Activated naive CD4-positive, alpha-beta T cell treated with anti-CD3 and anti-CD28 coated beads for 36 hours (primary cell): ENCODE measurements at regions of chr4 and their contacts with region 1.

Region 1: GRCh38 chr4:122689972-122690371 is 42.5 kb upstream of the BBS12 start:
- DNase-seq: no peak
- H3K4me3 Mint-ChIP-seq: no peak overlapping the region
- H3K27ac Mint-ChIP-seq: no peak overlapping the region
- H3K4me1 Mint-ChIP-seq: peaks cover 53% of the 10 kb centered on the region
- H3K27me3 Mint-ChIP-seq: peaks cover 2% of the 10 kb centered on the region

Region 2: DNA sequence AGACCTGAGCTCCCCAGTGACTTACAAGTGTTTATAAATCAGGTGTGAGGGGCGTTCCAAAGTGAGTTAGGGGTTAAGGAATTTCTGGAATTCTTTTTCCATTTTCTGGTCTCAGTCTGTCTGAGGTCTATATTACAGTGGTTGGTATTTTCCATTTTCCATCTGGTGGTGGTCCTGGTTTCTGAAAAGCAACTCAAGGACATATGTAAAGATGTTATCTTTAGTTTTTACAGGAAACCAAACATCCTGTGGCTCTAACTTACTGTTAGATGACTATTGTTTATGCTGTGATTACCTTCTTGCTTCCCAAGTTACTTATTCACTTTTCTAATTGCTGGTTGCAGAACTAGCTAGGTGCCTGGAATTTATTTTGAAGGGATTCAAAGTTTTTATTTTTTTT is 15.6 kb before region 1 on chr4:
- CTCF ChIA-PET with region 1: interaction called, 4 read pairs
- intact Hi-C with region 1: loop called (anchors 1 kb)
- DNase-seq: no peak
- H3K4me3 Mint-ChIP-seq: no peak overlapping the region
- H3K27ac Mint-ChIP-seq: no peak overlapping the region
- H3K4me1 Mint-ChIP-seq: peaks cover 38% of the 10 kb centered on the region
- H3K27me3 Mint-ChIP-seq: peaks cover 18% of the 10 kb centered on the region

Region 3: DNA sequence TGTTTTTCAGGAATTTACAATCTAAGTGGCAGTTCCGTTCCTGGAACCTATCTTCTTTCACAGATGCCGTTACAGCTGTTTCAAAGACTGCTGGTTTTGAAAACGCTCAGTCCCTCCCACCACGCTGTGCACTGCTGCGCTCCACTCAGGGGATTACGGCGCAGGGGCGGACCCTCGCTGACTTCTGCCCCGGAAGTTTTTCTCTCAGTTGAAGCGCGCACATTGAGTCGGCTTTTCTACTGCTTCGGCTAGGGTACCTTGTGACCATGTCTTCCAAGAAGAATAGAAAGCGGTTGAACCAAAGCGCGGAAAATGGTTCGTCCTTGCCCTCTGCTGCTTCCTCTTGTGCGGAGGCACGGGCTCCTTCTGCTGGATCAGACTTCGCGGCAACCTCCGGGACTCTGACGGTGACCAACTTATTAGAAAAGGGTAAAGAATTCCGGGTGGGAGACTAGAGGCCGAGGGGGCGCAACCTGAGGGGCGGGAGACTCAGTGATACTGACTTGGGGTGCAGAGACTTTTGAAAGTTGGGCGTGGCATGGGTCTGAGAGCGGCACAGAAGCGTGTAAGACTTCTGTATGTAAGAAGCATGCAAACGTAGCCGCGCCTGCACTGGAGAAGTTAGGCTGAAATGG is 233.0 kb after region 1 on chr4:
- CTCF ChIA-PET with region 1: no interaction called
- intact Hi-C with region 1: no loop called
- DNase-seq: peak; percentile 94
- H3K4me3 Mint-ChIP-seq: peak overlapping the region; percentile 99
- H3K27ac Mint-ChIP-seq: peak overlapping the region; percentile 87
- H3K4me1 Mint-ChIP-seq: peaks cover 11% of the 10 kb centered on the region
- H3K27me3 Mint-ChIP-seq: peaks cover 2% of the 10 kb centered on the region